MCF 10A (cell line): ENCODE measurements at regions of chr17 and their contacts with region 1.

Region 1: GRCh38 chr17:40191237-40192208 is 14.3 kb downstream of the RAPGEFL1 start:
- DNase-seq: peak; percentile 66
- H3K4me3 Mint-ChIP-seq: peak overlapping the region; percentile 72
- H3K27ac Mint-ChIP-seq: no peak overlapping the region
- H3K4me1 Mint-ChIP-seq: peaks cover 18% of the 10 kb centered on the region
- H3K27me3 Mint-ChIP-seq: no peaks in the 10 kb centered on the region
- CTCF ChIP-seq: no peak

Region 2: GRCh38 chr17:40177275-40177874 is 14.1 kb before region 1 on chr17 and contains the start of gene RAPGEFL1:
- CTCF ChIA-PET with region 1: interaction called, 6 read pairs
- POLR2A ChIA-PET with region 1: interaction called, 51 read pairs
- intact Hi-C with region 1: no loop called
- DNase-seq: peak; percentile 69
- H3K4me3 Mint-ChIP-seq: peak within 1 kb of the TSS; percentile 59
- H3K27ac Mint-ChIP-seq: peak within 1 kb of the TSS; percentile 92
- H3K4me1 Mint-ChIP-seq: peaks cover 29% of the 10 kb centered on the region
- H3K27me3 Mint-ChIP-seq: no peaks in the 10 kb centered on the region
- CTCF ChIP-seq: no peak
- total RNA-seq, gene RAPGEFL1: 4.9 and 5.6 TPM in 2 replicates

Region 3: GRCh38 chr17:40219073-40219860 is 27.7 kb after region 1 on chr17 and contains the start of gene WIPF2:
- CTCF ChIA-PET with region 1: interaction called, 7 read pairs
- POLR2A ChIA-PET with region 1: interaction called, 19 read pairs
- intact Hi-C with region 1: no loop called
- DNase-seq: peak; percentile 97
- H3K4me3 Mint-ChIP-seq: peak within 1 kb of the TSS; percentile 90
- H3K27ac Mint-ChIP-seq: peak within 1 kb of the TSS; percentile 98
- H3K4me1 Mint-ChIP-seq: peaks cover 16% of the 10 kb centered on the region
- H3K27me3 Mint-ChIP-seq: no peaks in the 10 kb centered on the region
- CTCF ChIP-seq: peak; percentile 68
- total RNA-seq, gene WIPF2: 31.9 and 32.8 TPM in 2 replicates